ENCODE measurements at regions of chr16 and their contacts with region 1.

Region 1: GRCh38 chr16:17369421-17370222 is 101.1 kb downstream of the XYLT1 start:
- DNase-seq: peak; percentile 40 to 90 (median 78)
- ATAC-seq: peak; percentile 77 to 78
- H3K4me3 Mint-ChIP-seq: peak overlapping the region; percentile 83 to 97 (median 92)
- H3K27ac Mint-ChIP-seq: peak overlapping the region; percentile 94 to 100 (median 99)
- H3K4me1 Mint-ChIP-seq: peaks cover 51 to 98% (median 93%) of the 10 kb centered on the region in 4 donors
- H3K27me3 Mint-ChIP-seq: peaks cover 0 to 3% (median 0%) of the 10 kb centered on the region in 5 donors

Region 2: GRCh38 chr16:16982614-16983013 is 387.0 kb before region 1 on chr16:
- POLR2A ChIA-PET with region 1: no interaction called
- DNase-seq: no peak
- ATAC-seq: no peak
- H3K4me3 Mint-ChIP-seq: no peak overlapping the region
- H3K27ac Mint-ChIP-seq: no peak overlapping the region
- H3K4me1 Mint-ChIP-seq: peaks cover 0 to 8% (median 4%) of the 10 kb centered on the region in 4 donors
- H3K27me3 Mint-ChIP-seq: no peaks in the 10 kb centered on the region

Region 3: DNA sequence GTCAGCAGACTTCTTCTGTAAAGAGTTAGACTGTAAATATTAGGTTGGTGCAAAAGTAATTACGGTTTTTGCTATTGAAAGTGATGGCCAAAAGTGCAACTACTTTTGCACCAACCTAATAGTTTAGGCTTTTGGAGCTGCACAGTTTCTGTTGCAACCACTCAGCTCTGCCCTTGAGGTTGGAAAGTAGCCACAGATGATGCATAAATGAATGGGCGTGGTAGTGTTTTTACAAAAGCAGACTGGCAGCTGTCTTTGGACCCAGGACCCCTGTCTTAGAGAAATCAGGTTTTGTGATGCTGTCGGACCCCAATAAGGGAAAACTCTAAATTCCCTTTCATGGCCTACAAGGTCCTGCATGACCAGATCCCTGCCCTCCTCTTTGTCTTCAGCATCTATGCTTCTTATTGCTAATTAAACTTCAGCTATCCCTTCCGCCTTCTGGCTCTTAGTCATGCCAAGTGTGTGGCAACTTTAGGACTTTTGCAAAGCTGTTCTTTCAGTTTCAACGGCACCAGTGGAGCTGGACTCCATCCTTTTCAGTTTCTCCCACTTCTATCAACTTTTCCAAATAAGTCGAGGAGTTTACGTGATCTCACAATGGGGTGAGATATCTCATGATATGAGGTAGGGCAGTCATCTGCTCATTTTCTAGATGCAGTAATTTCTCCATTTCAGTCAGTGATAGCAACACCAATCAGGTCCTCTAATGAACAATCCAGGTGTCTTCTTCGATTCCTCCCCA is 131.2 kb before region 1 on chr16:
- POLR2A ChIA-PET with region 1: no interaction called
- DNase-seq: no peak
- ATAC-seq: no peak
- H3K4me3 Mint-ChIP-seq: no peak overlapping the region
- H3K27ac Mint-ChIP-seq: peak overlapping the region in 3 of 10 donors; percentile 2 to 54 (median 53)
- H3K4me1 Mint-ChIP-seq: peaks cover 25 to 43% (median 32%) of the 10 kb centered on the region in 4 donors
- H3K27me3 Mint-ChIP-seq: no peaks in the 10 kb centered on the region

Region 4: DNA sequence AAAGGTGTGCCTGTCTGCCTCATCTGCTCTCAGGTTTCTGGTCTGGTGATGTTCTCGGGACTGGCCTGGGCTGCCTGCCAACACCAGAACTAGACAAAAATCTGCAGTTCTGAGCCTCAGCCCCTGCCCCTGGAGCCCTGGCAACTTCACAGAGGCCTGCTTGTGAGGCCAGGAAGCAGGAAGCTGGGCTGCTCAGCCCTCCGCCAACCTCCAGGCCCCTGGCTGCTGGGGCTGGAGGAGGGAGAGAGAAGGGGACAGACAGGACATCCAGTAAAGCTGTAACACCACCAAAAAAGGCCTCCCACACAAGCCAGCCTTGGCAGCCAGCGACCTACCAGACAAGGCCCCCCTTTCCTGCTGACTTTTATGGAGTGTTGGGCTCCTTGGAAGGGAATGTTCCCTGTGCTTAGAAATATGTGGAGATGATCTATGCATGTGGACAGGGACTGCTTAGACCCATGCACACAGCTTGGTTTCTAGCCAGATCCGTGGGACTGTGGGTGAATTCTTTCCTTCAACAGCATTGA is 56.5 kb before region 1 on chr16:
- POLR2A ChIA-PET with region 1: no interaction called
- DNase-seq: no peak
- ATAC-seq: peak in 1 of 2 donors; percentile 35
- H3K4me3 Mint-ChIP-seq: no peak overlapping the region
- H3K27ac Mint-ChIP-seq: peak overlapping the region in 8 of 10 donors; percentile 29 to 82 (median 50)
- H3K4me1 Mint-ChIP-seq: peaks cover 15 to 66% (median 38%) of the 10 kb centered on the region in 4 donors
- H3K27me3 Mint-ChIP-seq: no peaks in the 10 kb centered on the region

Region 5: GRCh38 chr16:17343028-17343427 is 26.6 kb before region 1 on chr16:
- POLR2A ChIA-PET with region 1: interaction called, 13 read pairs
- DNase-seq: peak in 7 of 10 donors; percentile 7 to 67 (median 63)
- ATAC-seq: peak; percentile 79 to 88
- H3K4me3 Mint-ChIP-seq: peak overlapping the region; percentile 12 to 79 (median 69)
- H3K27ac Mint-ChIP-seq: peak overlapping the region; percentile 72 to 92 (median 88)
- H3K4me1 Mint-ChIP-seq: peaks cover 44 to 85% (median 64%) of the 10 kb centered on the region in 4 donors
- H3K27me3 Mint-ChIP-seq: no peaks in the 10 kb centered on the region

Region 6: DNA sequence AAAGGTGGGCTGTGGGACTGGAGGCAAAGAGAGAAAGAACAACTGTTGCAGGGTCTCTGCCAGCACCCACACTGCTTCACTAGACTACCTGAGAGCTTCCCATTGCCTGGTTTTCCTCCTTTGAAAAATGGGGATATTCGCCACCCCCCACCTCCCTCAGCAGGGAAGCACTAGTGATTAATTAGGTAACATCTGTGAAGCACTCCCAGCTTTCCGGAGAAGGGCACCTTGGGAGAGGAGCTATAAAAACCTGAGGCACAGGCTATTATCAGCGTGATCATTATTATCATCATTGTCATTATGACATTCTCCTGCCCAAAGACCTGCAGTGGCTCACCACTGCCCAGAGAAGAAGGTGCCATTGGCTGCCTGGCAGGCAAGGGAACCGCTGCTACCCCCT is 17.6 kb after region 1 on chr16:
- POLR2A ChIA-PET with region 1: interaction called, 46 read pairs
- DNase-seq: no peak
- ATAC-seq: no peak
- H3K4me3 Mint-ChIP-seq: no peak overlapping the region
- H3K27ac Mint-ChIP-seq: peak overlapping the region in 1 of 10 donors; percentile 30
- H3K4me1 Mint-ChIP-seq: peaks cover 28 to 87% (median 63%) of the 10 kb centered on the region in 4 donors
- H3K27me3 Mint-ChIP-seq: no peaks in the 10 kb centered on the region

Region 7: GRCh38 chr16:17397499-17397891 is 27.9 kb after region 1 on chr16:
- POLR2A ChIA-PET with region 1: interaction called, 15 read pairs
- DNase-seq: no peak
- ATAC-seq: peak; percentile 30 to 43
- H3K4me3 Mint-ChIP-seq: peak overlapping the region in 4 of 10 donors; percentile 15 to 19 (median 16)
- H3K27ac Mint-ChIP-seq: peak overlapping the region; percentile 73 to 95 (median 88)
- H3K4me1 Mint-ChIP-seq: peaks cover 27 to 61% (median 53%) of the 10 kb centered on the region in 4 donors
- H3K27me3 Mint-ChIP-seq: no peaks in the 10 kb centered on the region

Region 8: GRCh38 chr16:17416461-17417311 is 47.1 kb after region 1 on chr16:
- POLR2A ChIA-PET with region 1: interaction called, 34 read pairs
- DNase-seq: peak; percentile 7 to 74 (median 50)
- ATAC-seq: peak; percentile 97 to 98
- H3K4me3 Mint-ChIP-seq: peak overlapping the region; percentile 79 to 91 (median 87)
- H3K27ac Mint-ChIP-seq: peak overlapping the region; percentile 91 to 96 (median 95)
- H3K4me1 Mint-ChIP-seq: peaks cover 21 to 69% (median 40%) of the 10 kb centered on the region in 4 donors
- H3K27me3 Mint-ChIP-seq: no peaks in the 10 kb centered on the region

Region 9: DNA sequence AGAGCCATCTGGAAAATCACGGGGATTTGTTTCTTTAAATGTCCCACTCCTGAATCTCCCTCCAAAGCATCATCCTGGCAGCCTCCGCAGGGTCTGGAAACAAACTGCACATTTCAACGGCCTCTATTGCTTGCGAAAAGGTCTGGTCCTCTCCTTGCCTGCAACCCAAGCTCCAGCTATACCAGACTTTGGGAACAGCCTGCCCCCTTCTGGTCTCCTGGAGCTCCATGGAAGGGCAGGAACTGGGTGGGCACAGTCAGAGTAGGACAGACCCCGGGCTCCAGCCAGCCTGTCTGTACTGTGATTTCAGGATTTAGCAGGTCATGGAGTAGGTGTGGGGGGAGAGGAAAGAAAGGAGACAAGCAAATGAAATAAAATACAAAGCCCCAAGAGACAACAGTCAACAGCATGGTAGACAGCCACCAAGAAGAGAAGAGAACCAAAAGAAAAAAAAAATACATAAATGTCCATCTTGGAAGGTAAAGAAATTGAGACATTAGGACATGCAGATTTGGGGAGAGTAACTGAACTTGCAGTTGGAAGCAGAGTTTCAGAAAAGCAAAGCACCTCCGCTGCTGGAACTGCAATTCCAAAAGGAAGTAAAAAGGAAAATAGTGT is 98.4 kb after region 1 on chr16:
- POLR2A ChIA-PET with region 1: interaction called, 40 read pairs
- DNase-seq: peak in 5 of 10 donors; percentile 27 to 40 (median 35)
- ATAC-seq: no peak
- H3K4me3 Mint-ChIP-seq: peak overlapping the region; percentile 76 to 99 (median 92)
- H3K27ac Mint-ChIP-seq: peak overlapping the region in 8 of 10 donors; percentile 32 to 90 (median 62)
- H3K4me1 Mint-ChIP-seq: peaks cover 38 to 68% (median 51%) of the 10 kb centered on the region in 4 donors
- H3K27me3 Mint-ChIP-seq: no peaks in the 10 kb centered on the region